ENCODE measurements at regions of chr6 and their contacts with region 1.

Region 1: DNA sequence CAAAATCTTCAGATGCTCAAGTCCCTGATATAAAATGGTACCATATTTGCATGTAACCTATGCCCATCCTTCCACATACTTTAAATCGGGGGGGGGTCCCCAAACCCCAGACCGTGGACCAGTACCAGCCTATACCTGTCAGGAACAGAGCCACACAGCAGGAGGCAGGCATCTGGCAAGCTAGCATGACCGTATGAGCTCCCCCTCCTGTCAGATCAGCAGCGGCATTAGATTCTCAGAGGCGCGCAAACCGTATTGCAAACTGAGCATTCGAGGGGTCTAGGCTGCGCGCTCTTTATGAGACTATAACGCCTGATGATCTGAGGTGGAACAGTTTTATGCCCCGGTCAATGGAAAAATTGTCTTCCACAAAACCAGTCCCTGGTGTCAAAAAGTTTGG is 30.7 kb downstream of the FGD2 start:
- DNase-seq: no peak
- H3K4me3 ChIP-seq: no peak overlapping the region
- H3K4me3 Mint-ChIP-seq: no peak overlapping the region
- H3K27ac ChIP-seq: no peak overlapping the region
- H3K27ac Mint-ChIP-seq: no peak overlapping the region
- H3K4me1 ChIP-seq: no peaks in the 10 kb centered on the region
- H3K4me1 Mint-ChIP-seq: peaks cover 6 to 20% (median 10%) of the 10 kb centered on the region in 3 donors
- H3K27me3 ChIP-seq: no peaks in the 10 kb centered on the region
- H3K27me3 Mint-ChIP-seq: no peaks in the 10 kb centered on the region

Region 2: DNA sequence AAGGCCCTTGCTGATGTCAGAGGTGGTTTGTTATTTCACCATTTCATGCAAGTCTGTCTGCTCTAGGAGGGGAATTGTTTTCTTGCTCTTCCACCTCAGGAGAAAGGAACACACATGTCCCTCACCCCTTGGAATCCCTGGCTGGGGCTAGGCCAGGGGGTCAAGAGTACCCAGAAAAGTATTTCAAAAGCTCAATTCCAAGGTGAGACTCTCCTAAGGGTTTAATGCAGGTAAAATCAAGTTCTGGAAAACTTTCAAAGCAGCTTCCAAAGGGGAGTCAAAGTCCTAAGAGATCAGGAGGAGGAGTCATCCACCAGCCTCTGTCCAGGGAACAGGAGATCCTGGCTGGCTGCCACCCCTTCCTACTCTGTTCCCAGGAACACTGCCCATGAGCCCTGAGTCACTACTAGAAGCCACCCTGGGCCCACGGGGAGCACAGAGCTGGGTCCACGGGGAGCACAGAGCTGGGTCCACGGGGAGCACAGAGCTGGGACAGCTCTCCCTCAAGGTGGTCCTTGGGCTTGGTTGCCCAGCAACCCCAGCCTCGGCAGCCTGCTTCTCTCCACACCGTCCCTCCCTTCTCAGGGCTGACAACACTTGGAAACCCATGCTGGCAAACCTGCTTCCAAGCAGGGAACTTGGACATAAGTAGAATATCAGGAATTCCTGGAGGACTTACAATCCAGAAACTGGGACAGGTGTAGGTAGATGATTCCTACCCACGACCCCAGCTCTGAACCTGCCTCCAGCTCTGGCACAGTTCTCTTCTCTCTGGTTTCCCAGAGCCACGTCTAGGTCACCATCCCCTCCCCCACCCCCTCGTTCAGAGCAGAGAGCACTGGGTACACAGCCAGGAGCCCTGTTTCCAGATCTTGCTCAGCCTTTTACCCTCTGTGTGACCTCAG is 393.0 kb before region 1 on chr6:
- CTCF ChIA-PET with region 1: no interaction called
- POLR2A ChIA-PET with region 1: no interaction called
- DNase-seq: no peak
- H3K4me3 ChIP-seq: no peak overlapping the region
- H3K4me3 Mint-ChIP-seq: no peak overlapping the region
- H3K27ac ChIP-seq: no peak overlapping the region
- H3K27ac Mint-ChIP-seq: no peak overlapping the region
- H3K4me1 ChIP-seq: no peaks in the 10 kb centered on the region
- H3K4me1 Mint-ChIP-seq: no peaks in the 10 kb centered on the region
- H3K27me3 ChIP-seq: no peaks in the 10 kb centered on the region
- H3K27me3 Mint-ChIP-seq: peaks cover 3% of the 10 kb centered on the region in 2 donors

Region 3: DNA sequence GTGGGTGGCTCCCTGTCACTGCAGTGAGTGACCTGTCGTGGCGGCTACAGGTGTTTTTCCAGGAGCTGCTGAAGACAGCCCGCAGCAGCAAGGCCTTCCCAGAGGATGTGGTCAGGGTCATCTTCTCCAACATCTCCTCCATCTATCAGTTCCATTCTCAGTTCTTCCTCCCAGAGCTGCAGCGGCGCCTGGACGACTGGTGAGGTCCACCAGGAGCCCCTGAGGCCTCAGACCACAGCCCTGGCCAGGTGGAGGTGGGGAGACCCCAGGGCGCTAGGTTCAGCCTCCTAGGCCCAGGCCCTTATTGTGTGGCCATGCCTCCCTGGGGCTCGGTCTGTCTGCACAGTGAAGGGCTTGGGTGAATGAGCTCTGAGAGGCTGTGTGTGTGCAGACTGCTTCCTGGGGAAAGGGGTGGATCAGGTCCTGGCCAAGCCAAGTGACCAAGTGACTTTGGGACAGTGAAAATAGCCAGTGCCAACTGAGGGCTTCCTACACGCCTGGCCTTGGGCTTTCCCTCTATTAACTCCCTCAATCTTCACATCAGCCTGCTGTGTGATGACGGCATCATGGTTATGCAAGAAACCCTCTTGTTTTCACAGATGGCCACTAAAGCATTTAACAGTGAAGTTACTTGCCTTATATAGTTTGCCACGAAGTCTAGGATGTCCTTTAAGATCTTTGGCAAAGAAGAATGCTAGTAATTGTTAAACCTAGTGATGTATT is 24.3 kb before region 1 on chr6:
- CTCF ChIA-PET with region 1: no interaction called
- POLR2A ChIA-PET with region 1: no interaction called
- DNase-seq: peak in 1 of 5 donors; percentile 44
- H3K4me3 ChIP-seq: no peak overlapping the region
- H3K4me3 Mint-ChIP-seq: no peak overlapping the region
- H3K27ac ChIP-seq: no peak overlapping the region
- H3K27ac Mint-ChIP-seq: peak overlapping the region in 1 of 8 donors; percentile 89
- H3K4me1 ChIP-seq: peaks cover under 1% of the 10 kb centered on the region
- H3K4me1 Mint-ChIP-seq: peaks cover 0 to 14% (median 4%) of the 10 kb centered on the region in 3 donors
- H3K27me3 ChIP-seq: no peaks in the 10 kb centered on the region
- H3K27me3 Mint-ChIP-seq: no peaks in the 10 kb centered on the region

Region 4: DNA sequence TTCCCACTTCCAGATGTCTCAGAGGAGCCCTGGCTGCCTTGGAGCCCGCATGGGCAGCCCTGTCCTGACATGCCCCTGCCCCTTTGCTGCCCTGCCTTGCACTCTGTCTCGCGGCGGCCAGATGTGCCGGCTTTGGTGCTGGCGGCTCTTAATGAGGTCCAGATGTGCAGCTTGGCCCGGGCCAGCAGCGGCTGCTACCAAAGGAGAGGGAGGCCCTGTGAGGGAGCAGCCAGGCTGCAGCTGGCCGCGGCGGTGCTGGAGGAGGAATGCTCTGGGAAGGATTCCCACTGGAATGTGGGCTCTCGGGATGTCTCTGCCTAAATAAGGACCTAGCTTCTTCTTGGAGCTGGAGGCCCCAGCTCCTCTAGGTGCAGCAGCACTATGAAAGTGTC is 41.8 kb after region 1 on chr6:
- CTCF ChIA-PET with region 1: no interaction called
- POLR2A ChIA-PET with region 1: interaction called, 12 read pairs
- DNase-seq: no peak
- H3K4me3 ChIP-seq: no peak overlapping the region
- H3K4me3 Mint-ChIP-seq: no peak overlapping the region
- H3K27ac ChIP-seq: no peak overlapping the region
- H3K27ac Mint-ChIP-seq: no peak overlapping the region
- H3K4me1 ChIP-seq: peaks cover 3% of the 10 kb centered on the region
- H3K4me1 Mint-ChIP-seq: peaks cover 2 to 8% (median 4%) of the 10 kb centered on the region in 3 donors
- H3K27me3 ChIP-seq: no peaks in the 10 kb centered on the region
- H3K27me3 Mint-ChIP-seq: peaks cover 0 to 4% of the 10 kb centered on the region in 2 donors